ENCODE measurements at regions of chr17 and their contacts with region 1.

Region 1: GRCh38 chr17:14886240-14886639 is 378.9 kb downstream of the PMP22 start:
- DNase-seq: no peak
- ATAC-seq: peak; percentile 91
- H3K4me3 Mint-ChIP-seq: no peak overlapping the region
- H3K27ac Mint-ChIP-seq: no peak overlapping the region
- H3K4me1 Mint-ChIP-seq: no peaks in the 10 kb centered on the region
- H3K27me3 Mint-ChIP-seq: peaks cover 3% of the 10 kb centered on the region; the same call in 1 of the 2 replicates
- CTCF ChIP-seq: no peak

Region 2: DNA sequence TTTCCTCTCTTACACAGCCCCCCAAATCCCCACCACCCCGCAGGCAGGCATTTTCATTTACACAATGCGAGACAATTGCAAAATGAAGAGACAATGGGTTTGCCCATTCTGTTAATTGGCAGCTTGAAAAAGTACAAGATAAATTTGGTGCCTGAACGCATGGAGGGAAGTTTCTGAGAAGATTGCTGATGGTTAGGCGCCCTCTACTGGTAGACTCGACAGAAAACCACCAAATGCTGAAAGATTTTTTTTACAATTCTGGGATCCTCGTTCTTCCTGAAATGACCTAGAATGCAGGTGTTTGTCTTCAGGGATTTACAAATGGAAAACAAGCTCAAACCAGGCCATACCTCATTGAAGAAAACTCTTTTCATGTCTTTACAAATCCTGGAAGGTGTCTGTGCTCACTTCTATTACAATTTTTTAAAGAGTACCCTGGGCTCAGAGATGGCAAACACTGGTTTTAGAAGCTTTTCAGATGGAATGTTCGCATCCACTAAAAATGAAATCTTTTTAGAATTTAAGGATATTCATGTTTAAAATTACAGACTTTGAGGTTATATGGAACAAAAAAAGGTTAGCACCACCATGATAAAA is 40.4 kb after region 1 on chr17:
- CTCF ChIA-PET with region 1: interaction called, 14 read pairs
- POLR2A ChIA-PET with region 1: no interaction called
- DNase-seq: peak; percentile 45
- ATAC-seq: no peak
- H3K4me3 Mint-ChIP-seq: no peak overlapping the region
- H3K27ac Mint-ChIP-seq: no peak overlapping the region
- H3K4me1 Mint-ChIP-seq: 0 out of 2 replicates have a peak, but pooled peaks cover 4% of the 10 kb centered on the region
- H3K27me3 Mint-ChIP-seq: no peaks in the 10 kb centered on the region
- CTCF ChIP-seq: peak; percentile 76

Region 3: GRCh38 chr17:15048381-15048780 is 162.1 kb after region 1 on chr17:
- CTCF ChIA-PET with region 1: interaction called, 15 read pairs
- POLR2A ChIA-PET with region 1: no interaction called
- DNase-seq: no peak
- ATAC-seq: peak; percentile 87
- H3K4me3 Mint-ChIP-seq: peak overlapping the region; percentile 2; the same call in 1 of the 2 replicates
- H3K27ac Mint-ChIP-seq: peak overlapping the region; percentile 33
- H3K4me1 Mint-ChIP-seq: peaks cover 37% of the 10 kb centered on the region
- H3K27me3 Mint-ChIP-seq: no peaks in the 10 kb centered on the region
- CTCF ChIP-seq: no peak

Measured in WTC11 (cell line).